WTC11 (cell line): ENCODE measurements at regions of chr4 and their contacts with region 1.

Region 1: GRCh38 chr4:77697860-77698590 is 92.4 kb downstream of the CXCL13 start:
- DNase-seq: peak; percentile 28
- ATAC-seq: peak; percentile 81
- H3K4me3 Mint-ChIP-seq: no peak overlapping the region
- H3K27ac Mint-ChIP-seq: no peak overlapping the region
- H3K4me1 Mint-ChIP-seq: peaks cover 13% of the 10 kb centered on the region; the same call in 1 of the 2 replicates
- H3K27me3 Mint-ChIP-seq: no peaks in the 10 kb centered on the region
- CTCF ChIP-seq: no peak

Region 2: GRCh38 chr4:77465271-77465670 is 232.8 kb before region 1 on chr4:
- CTCF ChIA-PET with region 1: interaction called, 13 read pairs
- POLR2A ChIA-PET with region 1: no interaction called
- DNase-seq: peak; percentile 50
- ATAC-seq: peak; percentile 77
- H3K4me3 Mint-ChIP-seq: no peak overlapping the region
- H3K27ac Mint-ChIP-seq: no peak overlapping the region
- H3K4me1 Mint-ChIP-seq: no peaks in the 10 kb centered on the region
- H3K27me3 Mint-ChIP-seq: peaks cover 12% of the 10 kb centered on the region
- CTCF ChIP-seq: no peak

Region 3: GRCh38 chr4:77600521-77601451 is 97.2 kb before region 1 on chr4:
- CTCF ChIA-PET with region 1: interaction called, 11 read pairs
- POLR2A ChIA-PET with region 1: no interaction called
- DNase-seq: peak; percentile 29
- ATAC-seq: peak; percentile 88
- H3K4me3 Mint-ChIP-seq: no peak overlapping the region
- H3K27ac Mint-ChIP-seq: no peak overlapping the region
- H3K4me1 Mint-ChIP-seq: no peaks in the 10 kb centered on the region
- H3K27me3 Mint-ChIP-seq: no peaks in the 10 kb centered on the region
- CTCF ChIP-seq: peak; percentile 62; the same call in 1 of the 2 replicates

Region 4: GRCh38 chr4:77681792-77682191 is 16.2 kb before region 1 on chr4:
- CTCF ChIA-PET with region 1: interaction called, 11 read pairs
- POLR2A ChIA-PET with region 1: no interaction called
- DNase-seq: no peak
- ATAC-seq: no peak
- H3K4me3 Mint-ChIP-seq: no peak overlapping the region
- H3K27ac Mint-ChIP-seq: no peak overlapping the region
- H3K4me1 Mint-ChIP-seq: peaks cover 3% of the 10 kb centered on the region; the same call in 1 of the 2 replicates
- H3K27me3 Mint-ChIP-seq: no peaks in the 10 kb centered on the region
- CTCF ChIP-seq: no peak